PC-3 (cell line): ENCODE measurements at regions of chr7 and their contacts with region 1.

Region 1: GRCh38 chr7:19294619-19295018 is 149.4 kb upstream of the FERD3L start:
- DNase-seq: peak; percentile 87
- ATAC-seq: peak; percentile 91
- H3K4me3 ChIP-seq: no peak overlapping the region
- H3K27ac ChIP-seq: peak overlapping the region; percentile 10; the same call in 1 of the 2 replicates
- H3K4me1 ChIP-seq: peaks cover 12% of the 10 kb centered on the region
- H3K27me3 ChIP-seq: no peaks in the 10 kb centered on the region
- CTCF ChIP-seq: no peak

Region 2: DNA sequence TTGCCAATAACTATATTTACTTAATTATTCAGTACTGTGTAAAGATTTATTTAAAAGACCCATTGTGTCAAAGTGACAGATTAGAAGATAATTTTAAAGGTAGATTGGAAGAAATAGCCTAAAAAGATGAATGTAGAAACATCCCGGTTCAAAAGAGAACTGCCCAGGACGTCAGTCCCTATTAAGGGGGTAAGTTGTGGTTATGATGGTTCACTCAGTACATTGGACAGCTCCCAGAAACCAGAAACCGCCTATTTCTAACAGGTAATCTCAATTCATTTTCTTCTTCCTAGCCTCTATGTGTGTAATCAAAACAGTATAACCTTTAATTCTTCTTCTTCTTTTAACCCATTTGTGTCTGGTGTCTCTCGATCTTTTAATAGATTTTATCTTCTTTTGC is 147.9 kb before region 1 on chr7:
- CTCF ChIA-PET with region 1: no interaction called
- POLR2A ChIA-PET with region 1: no interaction called
- intact Hi-C with region 1: loop called (anchors 5 kb)
- DNase-seq: peak; percentile 46
- ATAC-seq: peak; percentile 85
- H3K4me3 ChIP-seq: no peak overlapping the region
- H3K27ac ChIP-seq: no peak overlapping the region
- H3K4me1 ChIP-seq: 0 out of 2 replicates have a peak, but pooled peaks cover 1% of the 10 kb centered on the region
- H3K27me3 ChIP-seq: no peaks in the 10 kb centered on the region
- CTCF ChIP-seq: no peak

Region 3: DNA sequence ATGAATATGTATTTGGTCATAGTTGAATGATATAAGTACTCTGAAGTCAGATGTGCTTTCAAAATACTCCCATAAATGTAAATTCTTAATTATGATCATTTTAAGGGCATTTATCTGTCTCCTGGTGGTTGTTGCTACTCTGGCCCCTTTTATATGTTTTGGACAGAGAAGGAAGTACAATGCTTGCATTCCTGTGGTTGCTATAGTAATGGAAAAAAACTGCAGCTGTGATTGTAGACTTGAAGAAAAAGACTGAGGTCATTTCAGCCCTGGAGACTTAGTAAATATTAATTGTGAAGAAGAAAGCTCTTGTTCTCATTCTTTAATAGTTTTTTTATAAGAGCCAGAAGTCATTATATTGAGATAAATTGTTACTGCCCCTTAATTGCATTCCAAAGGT is 79.2 kb before region 1 on chr7:
- CTCF ChIA-PET with region 1: no interaction called
- POLR2A ChIA-PET with region 1: no interaction called
- intact Hi-C with region 1: loop called (anchors 5 kb)
- DNase-seq: peak; percentile 49
- ATAC-seq: peak; percentile 92
- H3K4me3 ChIP-seq: no peak overlapping the region
- H3K27ac ChIP-seq: no peak overlapping the region
- H3K4me1 ChIP-seq: no peaks in the 10 kb centered on the region; the same call in 1 of the 2 replicates
- H3K27me3 ChIP-seq: no peaks in the 10 kb centered on the region
- CTCF ChIP-seq: no peak

Region 4: DNA sequence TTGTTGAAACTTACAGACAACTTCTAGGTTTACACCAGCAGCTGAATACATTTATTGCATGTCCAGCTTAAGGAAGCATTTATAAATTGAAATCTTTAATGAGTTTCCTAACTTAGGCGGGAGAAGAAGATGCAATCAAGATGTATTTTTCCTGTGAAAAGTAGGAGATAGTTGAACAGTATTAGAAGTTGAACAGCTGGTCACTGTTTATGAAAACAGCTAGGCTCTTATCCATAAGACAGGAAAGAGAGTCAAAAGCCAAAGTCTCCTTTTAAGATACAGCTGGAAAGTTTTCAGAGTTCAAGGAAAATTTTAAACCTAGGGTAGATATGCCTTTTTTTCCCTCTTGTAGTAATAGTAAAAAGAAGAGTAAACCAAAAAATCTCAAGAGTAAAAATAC is 86.7 kb after region 1 on chr7:
- CTCF ChIA-PET with region 1: no interaction called
- POLR2A ChIA-PET with region 1: no interaction called
- intact Hi-C with region 1: no loop called
- DNase-seq: no peak
- ATAC-seq: no peak
- H3K4me3 ChIP-seq: no peak overlapping the region
- H3K27ac ChIP-seq: no peak overlapping the region
- H3K4me1 ChIP-seq: no peaks in the 10 kb centered on the region; the same call in 1 of the 2 replicates
- H3K27me3 ChIP-seq: no peaks in the 10 kb centered on the region
- CTCF ChIP-seq: no peak

Region 5: DNA sequence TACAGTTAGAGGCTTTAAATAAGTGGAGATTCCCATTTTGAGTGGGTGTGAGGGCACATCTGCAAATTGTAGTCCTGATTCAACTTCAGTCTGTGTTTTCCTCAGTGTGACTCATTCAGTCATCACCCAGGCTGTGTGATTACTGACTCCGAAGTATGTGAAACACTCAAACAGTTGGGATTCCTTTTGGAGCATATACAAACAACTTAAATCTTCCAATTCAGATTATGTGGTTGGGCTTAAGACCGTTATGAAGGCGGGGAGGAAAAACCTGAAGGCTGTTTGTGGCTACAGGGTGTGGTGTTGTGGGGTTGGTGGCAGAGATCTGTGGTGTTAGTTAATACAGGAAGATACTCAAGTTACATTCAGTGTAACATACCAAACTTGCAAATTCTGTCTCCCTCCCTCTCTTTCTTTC is 110.3 kb after region 1 on chr7:
- CTCF ChIA-PET with region 1: no interaction called
- POLR2A ChIA-PET with region 1: no interaction called
- intact Hi-C with region 1: loop called (anchors 10 kb)
- DNase-seq: peak; percentile 96
- ATAC-seq: peak; percentile 96
- H3K4me3 ChIP-seq: peak overlapping the region; percentile 31; the same call in 1 of the 2 replicates
- H3K27ac ChIP-seq: peak overlapping the region; percentile 72
- H3K4me1 ChIP-seq: peaks cover 34% of the 10 kb centered on the region
- H3K27me3 ChIP-seq: no peaks in the 10 kb centered on the region
- CTCF ChIP-seq: no peak